SK-N-SH (cell line): ENCODE measurements at regions of chr20 and their contacts with region 1.

Region 1: GRCh38 chr20:62368976-62369814 is 2.1 kb upstream of the LAMA5 start:
- DNase-seq: peak; percentile 89
- H3K4me3 ChIP-seq: peak overlapping the region in 1 of 2 experiments; percentile 35; a peak in 2 of 4 replicates
- H3K27ac ChIP-seq: peak overlapping the region in 1 of 2 experiments; percentile 93; a peak in 2 of 4 replicates
- H3K4me1 ChIP-seq: peaks cover 33 to 77% of the 10 kb centered on the region in 2 experiments; a peak in 3 of 4 replicates
- H3K27me3 ChIP-seq: no peaks in the 10 kb centered on the region
- CTCF ChIP-seq: peak; percentile 49
- EP300 ChIP-seq: peak in 1 of 2 experiments; percentile 16; a peak in 1 of 4 replicates
- RAD21 ChIP-seq: no peak

Region 2: GRCh38 chr20:62302341-62303058 is 66.7 kb before region 1 on chr20 and contains the start of gene ADRM1:
- CTCF ChIA-PET with region 1: interaction called, 25 read pairs
- POLR2A ChIA-PET with region 1: interaction called, 3 read pairs
- DNase-seq: peak; percentile 99
- H3K4me3 ChIP-seq: peak within 1 kb of the TSS; percentile 96 to 97
- H3K27ac ChIP-seq: peak within 1 kb of the TSS; percentile 80 to 94
- H3K4me1 ChIP-seq: peaks cover 7 to 26% of the 10 kb centered on the region in 2 experiments; a peak in 2 of 4 replicates
- H3K27me3 ChIP-seq: no peaks in the 10 kb centered on the region
- CTCF ChIP-seq: peak; percentile 82
- EP300 ChIP-seq: peak in 1 of 2 experiments; percentile 66; a peak in 1 of 4 replicates
- RAD21 ChIP-seq: peak; percentile 43
- polyA plus RNA-seq, gene ADRM1: 137 and 142 TPM in 2 replicates

Region 3: DNA sequence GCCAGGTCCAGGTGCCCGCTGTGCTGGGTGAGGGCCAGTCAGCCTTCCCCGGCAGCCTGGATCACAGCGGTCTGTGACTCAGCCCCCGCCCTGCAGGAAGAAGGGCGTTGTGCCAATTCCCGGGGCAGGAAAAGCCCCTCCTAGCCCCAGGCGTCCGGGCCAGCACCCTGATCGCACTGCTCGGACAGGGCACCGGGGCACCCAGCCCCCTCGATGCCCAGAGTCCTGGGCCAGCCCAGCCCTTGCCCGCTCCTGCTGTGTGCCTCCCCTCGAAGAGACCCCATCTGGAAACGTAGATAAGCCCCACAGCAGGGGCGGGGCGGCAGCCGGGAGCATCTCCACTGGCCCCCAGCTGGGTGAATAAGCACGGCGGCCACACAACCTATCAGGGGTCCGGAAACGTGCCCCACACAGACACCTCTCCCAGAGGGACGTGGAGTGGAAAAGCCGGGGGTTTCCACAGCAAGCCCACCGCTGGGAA is 12.0 kb before region 1 on chr20:
- CTCF ChIA-PET with region 1: interaction called, 18 read pairs
- POLR2A ChIA-PET with region 1: no interaction called
- DNase-seq: peak; percentile 66
- H3K4me3 ChIP-seq: no peak overlapping the region
- H3K27ac ChIP-seq: peak overlapping the region in 1 of 2 experiments; percentile 92; a peak in 2 of 4 replicates
- H3K4me1 ChIP-seq: peaks cover 29 to 89% of the 10 kb centered on the region in 2 experiments; a peak in 3 of 4 replicates
- H3K27me3 ChIP-seq: no peaks in the 10 kb centered on the region
- CTCF ChIP-seq: no peak
- EP300 ChIP-seq: no peak
- RAD21 ChIP-seq: no peak

Region 4: GRCh38 chr20:62388839-62389600 is 19.8 kb after region 1 on chr20:
- CTCF ChIA-PET with region 1: interaction called, 10 read pairs
- POLR2A ChIA-PET with region 1: interaction called, 9 read pairs
- DNase-seq: no peak
- H3K4me3 ChIP-seq: peak overlapping the region in 1 of 2 experiments; percentile 72; a peak in 1 of 4 replicates
- H3K27ac ChIP-seq: peak overlapping the region; percentile 0 to 23; a peak in 2 of 4 replicates
- H3K4me1 ChIP-seq: peaks cover 0 to 19% of the 10 kb centered on the region in 2 experiments; a peak in 2 of 4 replicates
- H3K27me3 ChIP-seq: no peaks in the 10 kb centered on the region
- CTCF ChIP-seq: peak; percentile 22; the same call in 1 of the 2 replicates
- EP300 ChIP-seq: no peak
- RAD21 ChIP-seq: no peak

Region 5: DNA sequence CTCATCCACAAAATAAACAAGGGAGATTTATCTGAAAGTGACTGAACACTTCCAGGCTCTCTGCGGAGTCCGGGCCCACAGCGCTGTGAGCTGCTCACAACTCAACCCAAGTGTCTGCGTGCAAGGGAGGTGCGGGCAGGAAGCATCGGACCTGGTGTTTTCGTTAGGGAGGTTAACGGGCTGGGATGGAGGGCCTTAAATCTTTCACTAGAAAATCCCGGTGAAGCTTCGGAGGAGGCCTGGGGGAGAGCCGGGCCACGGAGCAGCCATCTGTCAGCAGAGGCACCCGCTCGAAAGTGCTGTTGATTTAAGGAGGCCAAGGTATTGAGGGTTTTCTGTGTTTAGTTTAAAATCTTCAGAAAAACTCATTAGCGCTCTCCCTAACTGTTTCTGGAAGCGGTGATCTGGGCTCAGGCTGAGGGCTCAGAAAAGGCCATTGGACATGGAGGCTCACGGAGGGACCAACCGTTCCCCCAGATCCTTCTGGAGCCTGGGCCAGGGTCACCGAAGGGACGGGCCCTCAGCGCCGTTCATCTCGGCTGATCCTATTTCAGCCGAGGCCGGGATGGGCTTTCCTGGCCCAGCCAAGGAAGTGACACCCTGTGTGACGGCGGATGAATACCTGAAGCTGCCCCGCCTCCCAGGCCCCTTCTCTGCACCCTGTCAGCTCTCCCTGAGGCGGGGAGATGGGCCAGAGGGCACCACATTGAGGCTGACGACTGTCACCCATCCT is 85.9 kb after region 1 on chr20:
- CTCF ChIA-PET with region 1: no interaction called
- POLR2A ChIA-PET with region 1: no interaction called
- DNase-seq: no peak
- H3K4me3 ChIP-seq: no peak overlapping the region
- H3K27ac ChIP-seq: no peak overlapping the region
- H3K4me1 ChIP-seq: peaks cover 0 to 6% of the 10 kb centered on the region in 2 experiments; a peak in 1 of 4 replicates
- H3K27me3 ChIP-seq: no peaks in the 10 kb centered on the region
- CTCF ChIP-seq: no peak
- EP300 ChIP-seq: no peak
- RAD21 ChIP-seq: no peak